Endothelial cell of umbilical vein (primary cell): ENCODE measurements at regions of chr10 and their contacts with region 1.

Region 1: GRCh38 chr10:44569193-44570091 is 184.5 kb upstream of the CXCL12 start:
- DNase-seq: peak; percentile 93
- H3K4me3 ChIP-seq: no peak overlapping the region
- H3K27ac ChIP-seq: peak overlapping the region; percentile 83
- H3K4me1 ChIP-seq: peaks cover 18% of the 10 kb centered on the region
- H3K27me3 ChIP-seq: no peaks in the 10 kb centered on the region
- CTCF ChIP-seq: no peak
- POLR2A ChIP-seq: peak; percentile 50

Region 2: GRCh38 chr10:44539178-44539577 is 30.3 kb before region 1 on chr10:
- CTCF ChIA-PET with region 1: interaction called, 3 read pairs
- POLR2A ChIA-PET with region 1: no interaction called
- dilution Hi-C with region 1: no loop called
- intact Hi-C with region 1: loop called (anchors 1 kb)
- DNase-seq: no peak
- H3K4me3 ChIP-seq: no peak overlapping the region
- H3K27ac ChIP-seq: no peak overlapping the region
- H3K4me1 ChIP-seq: no peaks in the 10 kb centered on the region
- H3K27me3 ChIP-seq: no peaks in the 10 kb centered on the region
- CTCF ChIP-seq: no peak
- POLR2A ChIP-seq: no peak

Region 3: GRCh38 chr10:44752451-44753441 is 183.3 kb after region 1 on chr10:
- CTCF ChIA-PET with region 1: no interaction called
- POLR2A ChIA-PET with region 1: no interaction called
- dilution Hi-C with region 1: no loop called
- intact Hi-C with region 1: loop called (anchors 1 kb)
- DNase-seq: peak; percentile 80
- H3K4me3 ChIP-seq: no peak overlapping the region
- H3K27ac ChIP-seq: no peak overlapping the region
- H3K4me1 ChIP-seq: peaks cover 20% of the 10 kb centered on the region
- H3K27me3 ChIP-seq: no peaks in the 10 kb centered on the region
- CTCF ChIP-seq: no peak
- POLR2A ChIP-seq: no peak

Region 4: GRCh38 chr10:44801383-44802327 is 232.2 kb after region 1 on chr10:
- CTCF ChIA-PET with region 1: no interaction called
- POLR2A ChIA-PET with region 1: no interaction called
- dilution Hi-C with region 1: no loop called
- intact Hi-C with region 1: loop called (anchors 1 kb)
- DNase-seq: peak; percentile 92
- H3K4me3 ChIP-seq: no peak overlapping the region
- H3K27ac ChIP-seq: peak overlapping the region; percentile 19
- H3K4me1 ChIP-seq: peaks cover 22% of the 10 kb centered on the region
- H3K27me3 ChIP-seq: peaks cover 0 to 2% of the 10 kb centered on the region in 2 experiments
- CTCF ChIP-seq: no peak
- POLR2A ChIP-seq: no peak

Region 5: GRCh38 chr10:45008524-45009161 is 439.2 kb after region 1 on chr10:
- CTCF ChIA-PET with region 1: no interaction called
- POLR2A ChIA-PET with region 1: no interaction called
- dilution Hi-C with region 1: no loop called
- intact Hi-C with region 1: no loop called
- DNase-seq: peak; percentile 94
- H3K4me3 ChIP-seq: no peak overlapping the region
- H3K27ac ChIP-seq: no peak overlapping the region
- H3K4me1 ChIP-seq: peaks cover 4% of the 10 kb centered on the region
- H3K27me3 ChIP-seq: no peaks in the 10 kb centered on the region
- CTCF ChIP-seq: peak; percentile 70 to 77
- POLR2A ChIP-seq: no peak